ENCODE measurements at regions of chr7 and their contacts with region 1.

Region 1: DNA sequence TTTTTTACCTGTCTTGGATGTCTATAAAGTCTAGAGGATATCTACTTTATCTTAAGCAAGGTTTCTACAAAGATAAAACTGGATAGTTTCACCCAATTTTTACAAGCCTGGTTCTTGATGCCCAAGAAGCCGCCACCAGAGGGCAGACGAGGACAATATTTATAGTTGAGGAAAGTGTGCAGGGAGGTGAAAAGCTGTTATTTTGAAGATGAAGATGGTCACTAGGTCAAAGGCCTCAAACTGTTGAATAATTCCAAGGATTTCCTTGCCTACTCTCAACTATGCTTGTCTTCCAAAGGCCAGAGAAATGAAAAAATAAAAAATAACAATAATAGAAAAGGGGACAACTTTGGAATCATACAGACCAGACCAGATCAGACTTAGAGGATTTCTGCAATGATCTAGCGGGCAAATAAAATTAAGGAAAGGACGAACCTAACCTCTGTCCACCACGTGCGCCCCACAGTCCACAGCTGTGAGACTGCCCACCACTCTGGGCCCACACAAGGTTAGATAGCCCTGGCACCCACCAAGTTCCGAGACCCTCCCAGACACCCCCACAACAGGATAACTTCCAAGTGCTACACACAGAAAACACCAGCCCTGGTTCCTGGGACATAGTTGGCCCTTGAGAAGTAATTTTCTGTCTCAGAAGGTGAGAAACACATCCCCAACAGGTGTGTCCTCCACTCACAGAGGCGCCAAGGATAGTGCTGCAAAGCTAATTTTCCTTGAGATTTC is 2.8 kb downstream of the PKD1L1 start:
- DNase-seq: peak; percentile 22 to 82 (median 66)
- ATAC-seq: peak in 2 of 4 experiments; percentile 38 to 53
- H3K4me3 ChIP-seq: no peak overlapping the region
- H3K4me3 Mint-ChIP-seq: no peak overlapping the region
- H3K27ac ChIP-seq: no peak overlapping the region
- H3K27ac Mint-ChIP-seq: no peak overlapping the region
- H3K4me1 ChIP-seq: no peaks in the 10 kb centered on the region
- H3K4me1 Mint-ChIP-seq: no peaks in the 10 kb centered on the region
- H3K27me3 ChIP-seq: no peaks in the 10 kb centered on the region
- H3K27me3 Mint-ChIP-seq: no peaks in the 10 kb centered on the region

Region 2: GRCh38 chr7:47827351-47827756 is 118.1 kb before region 1 on chr7:
- CTCF ChIA-PET with region 1: no interaction called
- POLR2A ChIA-PET with region 1: no interaction called
- DNase-seq: no peak
- ATAC-seq: no peak
- H3K4me3 ChIP-seq: no peak overlapping the region
- H3K4me3 Mint-ChIP-seq: no peak overlapping the region
- H3K27ac ChIP-seq: no peak overlapping the region
- H3K27ac Mint-ChIP-seq: no peak overlapping the region
- H3K4me1 ChIP-seq: no peaks in the 10 kb centered on the region
- H3K4me1 Mint-ChIP-seq: no peaks in the 10 kb centered on the region
- H3K27me3 ChIP-seq: peaks cover 0 to 13% of the 10 kb centered on the region in 2 experiments
- H3K27me3 Mint-ChIP-seq: peaks cover 3 to 4% of the 10 kb centered on the region in 2 donors

Region 3: GRCh38 chr7:48109848-48110663 is 164.6 kb after region 1 on chr7:
- CTCF ChIA-PET with region 1: interaction called, 11 to 30 read pairs
- POLR2A ChIA-PET with region 1: no interaction called
- DNase-seq: peak; percentile 70 to 94 (median 84)
- ATAC-seq: peak; percentile 84 to 93 (median 89)
- H3K4me3 ChIP-seq: no peak overlapping the region
- H3K4me3 Mint-ChIP-seq: peak overlapping the region in 1 of 3 donors; percentile 9
- H3K27ac ChIP-seq: peak overlapping the region; percentile 58
- H3K27ac Mint-ChIP-seq: peak overlapping the region; percentile 77 to 79
- H3K4me1 ChIP-seq: peaks cover 2 to 10% of the 10 kb centered on the region in 2 experiments
- H3K4me1 Mint-ChIP-seq: peaks cover 12 to 14% (median 14%) of the 10 kb centered on the region in 3 donors
- H3K27me3 ChIP-seq: no peaks in the 10 kb centered on the region
- H3K27me3 Mint-ChIP-seq: no peaks in the 10 kb centered on the region

Region 4: GRCh38 chr7:48154792-48155413 is 209.5 kb after region 1 on chr7:
- CTCF ChIA-PET with region 1: interaction called, 8 to 26 read pairs
- POLR2A ChIA-PET with region 1: no interaction called
- DNase-seq: peak in 27 of 35 experiments; percentile 4 to 51 (median 14)
- ATAC-seq: peak in 1 of 4 experiments; percentile 41
- H3K4me3 ChIP-seq: no peak overlapping the region
- H3K4me3 Mint-ChIP-seq: no peak overlapping the region
- H3K27ac ChIP-seq: no peak overlapping the region
- H3K27ac Mint-ChIP-seq: no peak overlapping the region
- H3K4me1 ChIP-seq: no peaks in the 10 kb centered on the region
- H3K4me1 Mint-ChIP-seq: no peaks in the 10 kb centered on the region
- H3K27me3 ChIP-seq: peaks cover 0 to 11% of the 10 kb centered on the region in 2 experiments
- H3K27me3 Mint-ChIP-seq: peaks cover 30 to 32% of the 10 kb centered on the region in 2 donors